Left ventricle myocardium superior (tissue), 1 donor: ENCODE measurements at regions of chr12 and their contacts with region 1.

Region 1: GRCh38 chr12:31959161-31959700 is at the start of gene RESF1:
- DNase-seq: peak; percentile 94
- ATAC-seq: peak; percentile 99
- total RNA-seq, gene RESF1: 24.8 TPM

Region 2: DNA sequence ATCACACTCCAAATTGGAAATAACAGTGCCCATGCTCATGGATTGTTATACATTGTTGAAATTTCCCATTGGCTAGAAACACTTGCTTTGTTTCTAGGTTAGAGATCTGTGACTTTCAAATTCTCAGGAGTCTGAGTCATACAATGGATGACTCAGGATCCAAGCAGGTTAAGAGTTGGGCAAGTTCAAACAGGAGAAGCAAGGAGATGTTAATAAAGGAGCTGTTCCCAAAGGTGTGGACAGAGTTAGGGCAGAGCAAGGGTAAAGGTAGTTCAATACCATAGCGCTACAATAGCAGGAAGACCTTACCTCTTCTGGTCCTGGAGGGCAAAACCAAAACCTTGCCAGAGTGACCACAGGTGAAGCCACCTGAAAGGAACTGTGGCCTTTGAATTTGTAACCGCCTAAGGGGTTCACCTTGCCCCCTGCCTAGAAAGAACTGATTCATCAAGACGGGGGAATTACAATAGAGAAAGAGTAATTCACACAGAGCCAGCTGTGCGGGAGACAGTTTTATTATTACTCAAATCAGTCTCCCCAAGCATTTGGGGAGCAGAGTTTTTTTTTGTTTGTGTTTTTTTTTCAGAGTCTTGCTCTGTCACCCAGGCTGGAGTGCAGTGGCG is 226.2 kb before region 1 on chr12:
- intact Hi-C with region 1: loop called (anchors 10 kb)
- DNase-seq: no peak
- ATAC-seq: no peak

Region 3: GRCh38 chr12:31756977-31757420 is 202.2 kb before region 1 on chr12:
- intact Hi-C with region 1: no loop called
- DNase-seq: no peak
- ATAC-seq: no peak